Activated CD8-positive, alpha-beta memory T cell treated with anti-CD3 and anti-CD28 coated beads, Interleukin-2, amount 10 ng/mL, durations not matched to agents 7 days and 5 days (primary cell): ENCODE measurements at regions of chr14 and their contacts with region 1.

Region 1: GRCh38 chr14:71403656-71404055 is 496.4 kb downstream of the PCNX1 start:
- DNase-seq: peak; percentile 51
- ATAC-seq: peak; percentile 70
- H3K4me3 Mint-ChIP-seq: no peak overlapping the region
- H3K27ac Mint-ChIP-seq: peak overlapping the region; percentile 7
- H3K4me1 Mint-ChIP-seq: peaks cover 29% of the 10 kb centered on the region
- H3K27me3 Mint-ChIP-seq: no peaks in the 10 kb centered on the region

Region 2: GRCh38 chr14:70489579-70490175 is 914.0 kb before region 1 on chr14:
- CTCF ChIA-PET with region 1: no interaction called
- DNase-seq: no peak
- ATAC-seq: no peak
- H3K4me3 Mint-ChIP-seq: no peak overlapping the region
- H3K27ac Mint-ChIP-seq: no peak overlapping the region
- H3K4me1 Mint-ChIP-seq: peaks cover 3% of the 10 kb centered on the region
- H3K27me3 Mint-ChIP-seq: no peaks in the 10 kb centered on the region

Region 3: GRCh38 chr14:71320107-71320733 is 83.4 kb before region 1 on chr14:
- CTCF ChIA-PET with region 1: interaction called, 45 read pairs
- DNase-seq: peak; percentile 99
- ATAC-seq: peak; percentile 86
- H3K4me3 Mint-ChIP-seq: peak within 1 kb of the TSS; percentile 90
- H3K27ac Mint-ChIP-seq: peak within 1 kb of the TSS; percentile 90
- H3K4me1 Mint-ChIP-seq: peaks cover 44% of the 10 kb centered on the region
- H3K27me3 Mint-ChIP-seq: no peaks in the 10 kb centered on the region